Esophagus muscularis mucosa (tissue), 4 donors: ENCODE measurements at regions of chr1 and their contacts with region 1.

Region 1: GRCh38 chr1:6359216-6360116 is 34.1 kb downstream of the ACOT7 start:
- DNase-seq: no peak
- H3K4me3 ChIP-seq: peak overlapping the region in 2 of 4 donors; percentile 8 to 13
- H3K27ac ChIP-seq: peak overlapping the region; percentile 58 to 81 (median 76)
- H3K4me1 ChIP-seq: peaks cover 24 to 43% (median 37%) of the 10 kb centered on the region in 4 donors
- H3K27me3 ChIP-seq: no peaks in the 10 kb centered on the region
- CTCF ChIP-seq: no peak
- EP300 ChIP-seq: no peak
- POLR2A ChIP-seq: no peak

Region 2: GRCh38 chr1:6082430-6082971 is 277.0 kb before region 1 on chr1:
- intact Hi-C with region 1: no loop called
- DNase-seq: no peak
- H3K4me3 ChIP-seq: no peak overlapping the region
- H3K27ac ChIP-seq: no peak overlapping the region
- H3K4me1 ChIP-seq: peaks cover 0 to 27% (median 22%) of the 10 kb centered on the region in 4 donors
- H3K27me3 ChIP-seq: no peaks in the 10 kb centered on the region
- CTCF ChIP-seq: peak in 1 of 3 experiments; percentile 26
- EP300 ChIP-seq: no peak
- POLR2A ChIP-seq: no peak

Region 3: DNA sequence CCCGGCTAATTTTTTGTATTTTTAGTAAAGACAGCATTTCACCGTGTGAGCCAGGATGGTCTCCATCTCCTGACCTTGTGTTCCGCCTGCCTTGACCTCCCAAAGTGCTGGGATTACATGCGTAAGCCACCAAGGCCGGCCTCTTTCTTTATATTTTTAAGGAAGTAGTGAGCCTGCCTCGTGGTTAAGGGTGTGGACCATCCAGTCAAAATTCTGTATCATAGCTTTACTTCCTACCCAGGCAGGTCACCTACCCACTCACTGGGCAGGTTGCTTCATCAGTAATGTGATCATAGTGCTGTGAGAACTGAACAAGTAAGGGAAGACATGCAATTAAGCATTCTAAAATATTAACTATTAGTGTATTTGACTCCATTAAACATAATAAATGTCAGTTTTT is 42.2 kb after region 1 on chr1:
- intact Hi-C with region 1: loop called (anchors 2 kb)
- DNase-seq: no peak
- H3K4me3 ChIP-seq: no peak overlapping the region
- H3K27ac ChIP-seq: no peak overlapping the region
- H3K4me1 ChIP-seq: no peaks in the 10 kb centered on the region
- H3K27me3 ChIP-seq: peaks cover 0 to 13% (median 0%) of the 10 kb centered on the region in 4 donors
- CTCF ChIP-seq: no peak
- EP300 ChIP-seq: no peak
- POLR2A ChIP-seq: no peak

Region 4: GRCh38 chr1:6757719-6758435 is 398.4 kb after region 1 on chr1:
- intact Hi-C with region 1: no loop called
- DNase-seq: no peak
- H3K4me3 ChIP-seq: no peak overlapping the region
- H3K27ac ChIP-seq: no peak overlapping the region
- H3K4me1 ChIP-seq: no peaks in the 10 kb centered on the region
- H3K27me3 ChIP-seq: peaks cover 0 to 6% (median 0%) of the 10 kb centered on the region in 4 donors
- CTCF ChIP-seq: no peak
- EP300 ChIP-seq: no peak
- POLR2A ChIP-seq: no peak